CD4-positive, alpha-beta memory T cell (primary cell): ENCODE measurements at regions of chr4 and their contacts with region 1.

Region 1: GRCh38 chr4:186067757-186068385 is 1.1 kb upstream of the TLR3 start:
- DNase-seq: peak; percentile 14 to 41 (median 33)
- H3K4me3 ChIP-seq: peak overlapping the region in 1 of 2 donors; percentile 41
- H3K4me3 Mint-ChIP-seq: peak overlapping the region; percentile 15 to 88 (median 86)
- H3K27ac ChIP-seq: no peak overlapping the region
- H3K27ac Mint-ChIP-seq: peak overlapping the region in 4 of 7 donors; percentile 8 to 67 (median 22)
- H3K4me1 ChIP-seq: peaks cover 21% of the 10 kb centered on the region
- H3K4me1 Mint-ChIP-seq: peaks cover 17 to 33% (median 21%) of the 10 kb centered on the region in 4 donors
- H3K27me3 ChIP-seq: no peaks in the 10 kb centered on the region
- H3K27me3 Mint-ChIP-seq: peaks cover 3 to 10% of the 10 kb centered on the region in 2 donors

Region 2: GRCh38 chr4:185608185-185608584 is 459.7 kb before region 1 on chr4:
- CTCF ChIA-PET with region 1: no interaction called
- POLR2A ChIA-PET with region 1: no interaction called
- intact Hi-C with region 1: no loop called
- DNase-seq: no peak
- H3K4me3 ChIP-seq: no peak overlapping the region
- H3K4me3 Mint-ChIP-seq: no peak overlapping the region
- H3K27ac ChIP-seq: no peak overlapping the region
- H3K27ac Mint-ChIP-seq: no peak overlapping the region
- H3K4me1 ChIP-seq: no peaks in the 10 kb centered on the region
- H3K4me1 Mint-ChIP-seq: peaks cover 0 to 4% (median 1%) of the 10 kb centered on the region in 4 donors
- H3K27me3 ChIP-seq: no peaks in the 10 kb centered on the region
- H3K27me3 Mint-ChIP-seq: peaks cover 2 to 7% of the 10 kb centered on the region in 2 donors

Region 3: GRCh38 chr4:186137196-186137794 is 69.4 kb after region 1 on chr4:
- CTCF ChIA-PET with region 1: interaction called, 16 read pairs
- POLR2A ChIA-PET with region 1: no interaction called
- intact Hi-C with region 1: loop called (anchors 1 kb)
- DNase-seq: no peak
- H3K4me3 ChIP-seq: no peak overlapping the region
- H3K4me3 Mint-ChIP-seq: no peak overlapping the region
- H3K27ac ChIP-seq: no peak overlapping the region
- H3K27ac Mint-ChIP-seq: no peak overlapping the region
- H3K4me1 ChIP-seq: no peaks in the 10 kb centered on the region
- H3K4me1 Mint-ChIP-seq: peaks cover 0 to 2% (median under 1%) of the 10 kb centered on the region in 4 donors
- H3K27me3 ChIP-seq: no peaks in the 10 kb centered on the region
- H3K27me3 Mint-ChIP-seq: peaks cover 0 to 8% of the 10 kb centered on the region in 2 donors

Region 4: DNA sequence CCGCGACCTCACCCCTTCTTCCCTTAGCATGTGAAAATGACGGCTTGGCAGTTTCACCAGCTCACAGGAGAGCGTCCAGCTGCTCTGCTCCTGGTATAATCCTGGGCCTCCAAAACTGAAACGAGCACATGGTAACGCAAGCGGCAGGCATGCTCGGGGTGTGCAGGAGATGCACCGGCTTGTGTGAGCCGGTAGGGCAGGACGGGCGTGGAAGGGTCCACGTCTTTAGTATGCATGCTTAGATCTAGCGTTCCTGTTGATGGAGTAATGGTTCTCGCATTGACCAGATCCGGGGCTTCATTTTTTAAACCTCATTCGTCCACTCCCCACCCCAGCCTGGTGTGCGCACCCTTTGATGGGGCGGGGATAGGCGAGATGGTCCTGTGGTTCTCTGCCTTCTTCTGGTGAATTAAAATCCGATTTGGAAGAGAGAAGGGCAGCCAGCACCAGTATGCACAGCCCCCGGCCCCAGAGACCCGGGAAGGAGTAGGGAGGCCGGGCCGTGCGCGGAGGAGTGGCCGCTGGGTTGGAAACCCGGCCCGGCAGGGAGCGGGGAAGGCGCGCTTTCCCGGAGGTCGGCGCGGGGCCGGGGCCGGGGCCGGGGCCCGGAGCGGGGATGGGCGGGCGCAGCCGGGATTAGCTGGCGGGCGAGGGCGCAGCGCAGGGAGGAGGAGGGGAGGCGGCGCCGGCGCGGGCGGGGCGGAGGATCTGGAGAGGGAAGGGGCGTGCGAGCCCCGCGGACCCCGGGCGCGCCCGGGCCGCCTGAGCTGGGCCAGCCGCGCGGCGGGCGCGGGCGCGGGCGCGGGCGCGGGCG is 76.5 kb after region 1 on chr4:
- CTCF ChIA-PET with region 1: interaction called, 3 read pairs
- POLR2A ChIA-PET with region 1: no interaction called
- intact Hi-C with region 1: loop called (anchors 1 kb)
- DNase-seq: no peak
- H3K4me3 ChIP-seq: no peak overlapping the region
- H3K4me3 Mint-ChIP-seq: peak overlapping the region; percentile 49 to 83 (median 74)
- H3K27ac ChIP-seq: no peak overlapping the region
- H3K27ac Mint-ChIP-seq: peak overlapping the region in 1 of 7 donors; percentile 21
- H3K4me1 ChIP-seq: peaks cover 5% of the 10 kb centered on the region
- H3K4me1 Mint-ChIP-seq: peaks cover 2 to 17% (median 15%) of the 10 kb centered on the region in 4 donors
- H3K27me3 ChIP-seq: peaks cover 25% of the 10 kb centered on the region
- H3K27me3 Mint-ChIP-seq: peaks cover 37 to 47% of the 10 kb centered on the region in 2 donors

Region 5: GRCh38 chr4:186191200-186192065 is 123.6 kb after region 1 on chr4 and contains the start of gene CYP4V2:
- CTCF ChIA-PET with region 1: interaction called, 6 read pairs
- POLR2A ChIA-PET with region 1: interaction called, 20 read pairs
- intact Hi-C with region 1: no loop called
- DNase-seq: peak; percentile 85 to 93 (median 90)
- H3K4me3 ChIP-seq: peak within 1 kb of the TSS; percentile 79
- H3K4me3 Mint-ChIP-seq: peak within 1 kb of the TSS; percentile 92 to 97 (median 95)
- H3K27ac ChIP-seq: peak within 1 kb of the TSS; percentile 90
- H3K27ac Mint-ChIP-seq: peak within 1 kb of the TSS; percentile 96 to 98 (median 97)
- H3K4me1 ChIP-seq: peaks cover 36% of the 10 kb centered on the region
- H3K4me1 Mint-ChIP-seq: peaks cover 30 to 57% (median 42%) of the 10 kb centered on the region in 4 donors
- H3K27me3 ChIP-seq: no peaks in the 10 kb centered on the region
- H3K27me3 Mint-ChIP-seq: no peaks in the 10 kb centered on the region
- total RNA-seq, gene CYP4V2: 41.9 to 45.5 TPM

Region 6: GRCh38 chr4:186201535-186202230 is 133.8 kb after region 1 on chr4:
- CTCF ChIA-PET with region 1: interaction called, 26 read pairs
- POLR2A ChIA-PET with region 1: interaction called, 11 read pairs
- intact Hi-C with region 1: loop called (anchors 1 kb)
- DNase-seq: peak; percentile 41 to 77 (median 53)
- H3K4me3 ChIP-seq: no peak overlapping the region
- H3K4me3 Mint-ChIP-seq: peak overlapping the region in 7 of 8 donors; percentile 2 to 65 (median 30)
- H3K27ac ChIP-seq: no peak overlapping the region
- H3K27ac Mint-ChIP-seq: peak overlapping the region; percentile 19 to 94 (median 79)
- H3K4me1 ChIP-seq: no peaks in the 10 kb centered on the region
- H3K4me1 Mint-ChIP-seq: peaks cover 16 to 52% (median 25%) of the 10 kb centered on the region in 4 donors
- H3K27me3 ChIP-seq: no peaks in the 10 kb centered on the region
- H3K27me3 Mint-ChIP-seq: no peaks in the 10 kb centered on the region

Region 7: GRCh38 chr4:186587416-186588018 is 519.6 kb after region 1 on chr4:
- CTCF ChIA-PET with region 1: interaction called, 52 read pairs
- POLR2A ChIA-PET with region 1: no interaction called
- intact Hi-C with region 1: no loop called
- DNase-seq: peak in 4 of 5 donors; percentile 31 to 47 (median 38)
- H3K4me3 ChIP-seq: no peak overlapping the region
- H3K4me3 Mint-ChIP-seq: no peak overlapping the region
- H3K27ac ChIP-seq: no peak overlapping the region
- H3K27ac Mint-ChIP-seq: no peak overlapping the region
- H3K4me1 ChIP-seq: no peaks in the 10 kb centered on the region
- H3K4me1 Mint-ChIP-seq: no peaks in the 10 kb centered on the region
- H3K27me3 ChIP-seq: no peaks in the 10 kb centered on the region
- H3K27me3 Mint-ChIP-seq: no peaks in the 10 kb centered on the region